Cardiac septum (tissue), 1 donor: ENCODE measurements at regions of chr2 and their contacts with region 1.

Region 1: GRCh38 chr2:121974897-121975661 is 219.6 kb downstream of the TSN start:
- DNase-seq: no peak

Region 2: DNA sequence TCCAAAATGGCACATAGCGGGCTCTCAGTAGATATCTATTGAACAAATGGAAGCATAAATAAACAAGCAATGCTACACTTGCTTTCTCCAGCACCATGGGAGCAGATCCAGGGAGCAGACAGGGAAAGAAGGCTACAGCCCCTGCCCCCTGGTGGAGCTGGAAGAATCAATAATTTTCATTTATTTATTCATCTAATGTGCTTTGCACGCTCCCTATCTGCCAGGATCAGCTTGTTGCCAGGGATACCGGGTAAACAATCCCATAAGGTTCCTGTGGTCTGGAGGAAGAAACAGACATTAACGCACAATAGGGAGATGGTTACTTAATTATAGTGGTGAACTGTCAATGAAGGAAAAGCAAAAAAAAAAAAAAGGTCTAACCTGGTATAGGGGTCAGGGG is 285.7 kb before region 1 on chr2:
- intact Hi-C with region 1: no loop called
- DNase-seq: no peak

Region 3: DNA sequence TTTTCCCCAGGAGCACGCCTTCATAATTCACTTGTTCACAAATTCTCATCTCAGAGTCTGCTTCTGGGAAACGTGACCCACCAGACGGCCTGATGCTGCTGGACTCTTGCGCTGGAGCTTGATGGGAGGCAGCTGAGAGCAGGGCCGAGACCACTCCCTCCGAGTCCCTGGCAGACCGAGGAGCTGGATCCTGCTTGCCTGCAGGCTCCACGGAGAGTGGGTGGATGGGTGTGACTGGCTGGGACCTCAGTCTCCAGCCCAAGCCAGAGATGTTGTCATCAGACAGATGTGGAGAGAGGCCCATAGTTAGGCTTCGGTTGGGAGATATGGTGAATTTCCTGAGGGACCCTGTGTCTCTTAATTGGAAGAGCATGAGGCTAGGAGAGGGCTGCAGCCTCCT is 143.2 kb before region 1 on chr2:
- intact Hi-C with region 1: loop called (anchors 10 kb)
- DNase-seq: peak; percentile 80

Region 4: DNA sequence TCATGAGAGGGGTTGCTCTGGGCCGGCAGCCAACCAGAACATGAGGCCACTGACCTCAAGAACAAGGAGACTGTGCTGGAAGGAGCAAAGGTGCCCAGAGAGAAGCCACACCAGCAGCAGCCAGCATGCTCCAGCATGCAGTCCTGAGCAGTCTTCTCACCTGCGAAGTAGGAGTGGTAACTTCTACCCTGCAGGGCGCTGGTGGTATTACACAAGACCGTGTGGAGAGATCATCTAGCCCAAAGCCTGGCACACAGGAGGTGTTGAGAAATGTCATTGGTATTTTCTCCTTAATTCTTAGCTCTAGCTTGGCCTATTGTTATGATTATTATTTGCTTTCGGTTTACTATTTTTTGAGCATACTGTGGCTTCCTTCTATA is 86.9 kb before region 1 on chr2:
- intact Hi-C with region 1: no loop called
- DNase-seq: no peak

Region 5: GRCh38 chr2:122748552-122749011 is 773.5 kb after region 1 on chr2:
- intact Hi-C with region 1: loop called (anchors 10 kb)
- DNase-seq: no peak